ENCODE measurements at regions of chr16 and their contacts with region 1.

Region 1: DNA sequence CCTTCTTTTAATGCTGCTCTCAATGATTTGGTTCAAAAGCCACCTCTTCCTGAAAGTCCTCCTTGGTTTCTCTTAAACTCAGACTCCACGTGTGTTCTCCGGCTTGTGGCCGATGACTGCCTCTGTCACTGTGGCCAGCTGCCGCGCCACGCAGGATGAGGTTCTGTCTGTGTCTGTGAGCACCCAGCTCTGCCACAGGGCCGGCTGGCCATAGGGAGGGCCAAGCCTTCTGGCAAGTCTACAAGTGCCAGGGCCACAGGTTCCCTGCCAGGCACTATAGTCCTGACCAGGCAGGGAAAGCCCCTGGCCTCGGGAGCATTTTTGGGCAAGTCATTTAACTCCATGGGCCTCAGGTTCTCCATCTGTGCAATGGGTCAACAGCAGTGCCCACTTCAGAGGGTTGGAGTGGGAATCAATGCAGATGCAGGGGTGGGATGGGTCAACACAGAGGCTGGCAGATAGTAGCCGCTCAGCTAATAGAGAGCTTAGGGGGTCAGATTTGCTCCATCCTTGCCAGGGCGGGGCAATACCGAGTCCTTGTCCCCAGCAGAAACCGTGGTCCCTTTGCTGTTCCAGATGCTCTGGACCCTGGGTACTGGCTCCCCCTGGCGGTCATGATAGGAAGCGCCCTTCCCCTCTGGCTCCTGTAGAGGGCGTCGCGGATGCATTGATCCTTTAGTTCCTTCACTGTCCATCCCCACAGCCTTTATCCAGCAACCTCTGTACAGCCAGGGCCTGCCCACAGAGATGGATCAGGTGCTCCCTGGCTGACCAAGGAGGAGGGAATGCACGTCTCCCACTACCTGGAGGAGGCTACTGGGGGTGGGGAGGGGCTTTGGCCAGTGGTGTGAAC is 19.3 kb upstream of the ADGRG3 start:
- DNase-seq: peak in 2 of 4 donors; percentile 80 to 94
- ATAC-seq: peak; percentile 93
- H3K4me3 ChIP-seq: no peak overlapping the region
- H3K27ac ChIP-seq: peak overlapping the region; percentile 7 to 68
- H3K4me1 ChIP-seq: peaks cover 0 to 38% of the 10 kb centered on the region in 2 donors
- H3K27me3 ChIP-seq: peaks cover 0 to 13% of the 10 kb centered on the region in 2 donors
- CTCF ChIP-seq: peak; percentile 100

Region 2: GRCh38 chr16:57226701-57227621 is 421.9 kb before region 1 on chr16:
- intact Hi-C with region 1: no loop called
- DNase-seq: no peak
- ATAC-seq: no peak
- H3K4me3 ChIP-seq: no peak overlapping the region
- H3K27ac ChIP-seq: no peak overlapping the region
- H3K4me1 ChIP-seq: no peaks in the 10 kb centered on the region
- H3K27me3 ChIP-seq: no peaks in the 10 kb centered on the region
- CTCF ChIP-seq: no peak

Region 3: DNA sequence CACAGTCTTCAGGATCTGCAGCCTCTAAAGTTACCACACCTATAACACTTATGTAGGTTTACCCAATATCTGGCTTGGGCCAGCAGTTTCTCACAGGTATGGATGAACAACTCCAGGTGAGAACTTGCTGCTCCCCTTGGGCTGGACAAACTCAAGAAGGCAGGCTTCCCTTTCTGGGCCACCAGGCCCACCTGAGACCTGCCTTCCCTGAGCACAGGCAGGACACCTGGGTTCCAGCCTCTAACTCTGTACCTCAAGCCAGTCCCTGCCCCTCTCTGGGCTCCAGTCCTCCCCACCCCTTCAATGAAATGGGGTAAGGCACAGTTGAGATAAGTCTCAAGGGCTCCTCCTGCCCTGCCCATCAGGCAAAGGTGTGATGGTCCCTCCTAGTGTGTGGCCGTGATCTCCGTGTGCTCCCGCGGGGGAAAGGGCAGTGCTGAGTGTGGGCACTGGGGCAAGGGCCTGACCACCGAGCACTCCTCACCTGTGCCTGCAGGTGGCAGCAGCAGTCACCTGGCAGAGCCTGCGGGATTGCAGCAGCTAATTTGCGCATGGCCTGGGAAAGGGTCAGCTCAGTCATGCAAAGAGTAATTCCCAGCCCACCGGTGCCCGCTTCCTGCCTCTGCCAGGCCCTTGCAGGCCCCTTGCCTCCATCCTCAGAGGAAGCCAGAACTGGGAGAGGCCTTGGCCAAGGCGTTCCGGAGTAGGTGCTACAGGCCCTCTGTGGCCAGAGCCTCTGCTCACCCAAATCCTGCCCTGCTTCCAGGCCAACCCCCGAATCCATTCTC is 48.6 kb before region 1 on chr16:
- intact Hi-C with region 1: loop called in 1 of 2 experiments (anchors 5 kb)
- DNase-seq: peak in 3 of 4 donors; percentile 55 to 84 (median 55)
- ATAC-seq: peak; percentile 98
- H3K4me3 ChIP-seq: no peak overlapping the region
- H3K27ac ChIP-seq: no peak overlapping the region
- H3K4me1 ChIP-seq: peaks cover 0 to 26% of the 10 kb centered on the region in 2 donors
- H3K27me3 ChIP-seq: no peaks in the 10 kb centered on the region
- CTCF ChIP-seq: peak; percentile 42 to 73